ENCODE measurements at regions of chr2 and their contacts with region 1.

Region 1: GRCh38 chr2:102020596-102021181 is 28.9 kb downstream of the IL1R2 start:
- DNase-seq: peak; percentile 81 to 93 (median 91)
- H3K4me3 ChIP-seq: no peak overlapping the region
- H3K27ac ChIP-seq: no peak overlapping the region
- H3K4me1 ChIP-seq: peaks cover 4% of the 10 kb centered on the region
- H3K27me3 ChIP-seq: no peaks in the 10 kb centered on the region
- CTCF ChIP-seq: peak; percentile 97 to 98 (median 97)
- EP300 ChIP-seq: no peak
- POLR2A ChIP-seq: no peak

Region 2: DNA sequence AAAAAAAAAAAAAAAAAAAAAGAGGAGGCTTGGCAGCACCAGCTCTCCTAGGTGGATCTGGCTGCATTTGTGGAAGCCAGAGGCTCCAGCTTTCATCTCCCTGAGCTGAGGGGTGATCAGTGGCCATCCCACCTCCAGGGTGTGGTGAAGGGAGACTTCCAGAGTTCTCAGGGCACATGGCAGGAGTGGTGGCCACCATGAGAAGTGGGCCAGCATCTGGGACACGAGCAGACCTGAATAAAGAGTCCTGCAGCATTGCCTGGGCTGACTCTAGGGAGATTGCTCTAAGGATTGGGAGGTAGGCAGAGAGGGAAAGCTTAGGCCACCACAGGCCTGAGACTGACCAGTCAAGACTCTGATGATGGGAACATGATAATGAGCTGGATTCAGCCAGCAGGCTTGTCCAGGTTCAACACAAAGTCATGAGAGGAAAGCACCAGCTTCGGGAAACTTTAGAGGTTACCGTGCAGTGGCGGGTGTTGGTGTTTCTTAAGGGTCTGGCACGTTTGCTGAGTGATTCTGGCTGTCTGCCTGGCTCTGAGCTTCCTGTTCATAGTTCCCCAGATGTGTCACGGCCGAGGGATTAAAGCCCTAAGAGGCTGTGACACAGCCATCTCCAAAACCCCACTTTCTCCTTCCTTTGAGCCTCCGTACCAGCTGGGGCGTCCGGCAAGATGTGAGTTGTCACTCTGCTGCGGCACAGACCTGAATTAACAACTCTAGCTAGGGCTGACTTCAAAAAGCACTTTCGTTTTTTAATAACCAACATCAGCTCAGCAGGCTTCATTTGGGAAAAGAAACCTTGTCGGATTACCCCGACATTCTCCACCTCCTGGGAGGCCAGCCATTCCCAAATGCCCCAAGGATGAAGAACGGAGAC is 83.5 kb after region 1 on chr2:
- intact Hi-C with region 1: loop called in 1 of 4 experiments (anchors 10 kb)
- DNase-seq: peak; percentile 59 to 80 (median 68)
- H3K4me3 ChIP-seq: peak overlapping the region; percentile 33
- H3K27ac ChIP-seq: peak overlapping the region; percentile 9 to 48
- H3K4me1 ChIP-seq: peaks cover 12% of the 10 kb centered on the region
- H3K27me3 ChIP-seq: no peaks in the 10 kb centered on the region
- CTCF ChIP-seq: no peak
- EP300 ChIP-seq: no peak
- POLR2A ChIP-seq: no peak

Region 3: GRCh38 chr2:102166189-102166845 is 145.6 kb after region 1 on chr2:
- intact Hi-C with region 1: loop called (anchors 2 to 5 kb)
- DNase-seq: peak in 4 of 5 donors; percentile 30 to 64 (median 41)
- H3K4me3 ChIP-seq: no peak overlapping the region
- H3K27ac ChIP-seq: no peak overlapping the region
- H3K4me1 ChIP-seq: no peaks in the 10 kb centered on the region
- H3K27me3 ChIP-seq: no peaks in the 10 kb centered on the region
- CTCF ChIP-seq: peak; percentile 14 to 76 (median 65)
- EP300 ChIP-seq: no peak
- POLR2A ChIP-seq: no peak

Region 4: DNA sequence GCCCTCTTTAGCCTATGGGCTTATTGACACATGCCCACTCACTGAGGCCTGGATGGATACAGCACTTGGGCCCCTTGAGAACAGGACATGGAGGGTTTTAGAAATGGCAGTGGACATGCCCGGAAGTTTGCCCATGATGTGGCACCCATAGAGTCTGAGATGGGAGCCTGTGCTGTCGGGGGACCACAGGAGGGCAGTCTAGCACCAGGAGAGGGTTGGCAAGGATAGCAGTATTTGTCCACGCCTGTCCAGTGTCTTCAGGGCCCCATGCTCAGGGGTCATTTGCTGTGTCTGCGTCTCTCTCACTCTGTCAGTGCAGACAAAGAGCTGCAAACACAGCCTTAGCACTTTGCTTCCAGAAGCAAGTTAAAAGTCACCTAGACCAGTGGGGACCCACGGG is 214.8 kb after region 1 on chr2:
- intact Hi-C with region 1: loop called in 3 of 4 experiments (anchors 2 to 5 kb)
- DNase-seq: no peak
- H3K4me3 ChIP-seq: no peak overlapping the region
- H3K27ac ChIP-seq: no peak overlapping the region
- H3K4me1 ChIP-seq: peaks cover 2% of the 10 kb centered on the region
- H3K27me3 ChIP-seq: no peaks in the 10 kb centered on the region
- CTCF ChIP-seq: no peak
- EP300 ChIP-seq: no peak
- POLR2A ChIP-seq: no peak

Region 5: DNA sequence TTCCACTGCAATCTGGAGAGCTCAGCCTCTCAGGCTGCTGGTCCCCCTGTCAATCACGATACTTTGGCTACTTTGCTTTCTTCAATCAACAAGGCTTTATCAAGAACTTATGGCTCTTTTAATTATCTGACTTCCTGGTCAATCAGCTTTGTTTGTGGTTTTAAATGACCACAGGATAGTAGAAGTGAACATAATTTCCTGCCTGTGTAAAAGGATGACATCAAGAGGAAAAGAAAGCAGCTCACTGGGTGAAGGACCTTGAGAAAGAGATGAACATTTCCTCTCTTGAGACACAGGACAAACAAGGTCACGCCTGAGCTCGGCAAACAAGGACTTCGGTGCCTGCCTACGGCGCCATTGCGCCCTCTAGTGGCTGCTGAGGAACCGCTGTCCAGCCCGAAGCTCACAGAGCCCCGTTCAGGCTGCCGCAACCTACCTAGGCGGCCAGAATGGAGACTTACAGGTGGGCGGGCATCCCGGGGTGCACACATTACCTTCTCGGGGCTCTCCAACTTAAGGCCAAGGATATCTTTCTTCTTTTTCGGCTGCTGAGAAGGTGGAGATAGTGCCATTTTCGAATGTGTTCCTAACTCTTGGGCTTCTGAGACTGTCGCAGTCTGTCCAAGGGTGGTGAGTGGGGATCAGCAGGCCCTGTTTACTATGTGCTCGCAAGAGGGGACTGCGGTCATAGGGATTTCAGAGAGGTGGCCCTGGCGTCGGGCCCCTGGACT is 220.1 kb after region 1 on chr2:
- intact Hi-C with region 1: loop called (anchors 2 to 5 kb)
- DNase-seq: peak; percentile 88 to 94 (median 93)
- H3K4me3 ChIP-seq: no peak overlapping the region
- H3K27ac ChIP-seq: peak overlapping the region in 1 of 2 donors; percentile 25
- H3K4me1 ChIP-seq: peaks cover 2% of the 10 kb centered on the region
- H3K27me3 ChIP-seq: no peaks in the 10 kb centered on the region
- CTCF ChIP-seq: peak; percentile 95 to 99 (median 97)
- EP300 ChIP-seq: no peak
- POLR2A ChIP-seq: no peak

Region 6: GRCh38 chr2:102355526-102356380 is 335.1 kb after region 1 on chr2 and contains the start of gene IL18R1:
- intact Hi-C with region 1: loop called in 2 of 4 experiments (anchors 10 kb)
- DNase-seq: peak; percentile 66 to 84 (median 73)
- H3K4me3 ChIP-seq: peak within 1 kb of the TSS; percentile 69
- H3K27ac ChIP-seq: peak within 1 kb of the TSS; percentile 17 to 28
- H3K4me1 ChIP-seq: no peaks in the 10 kb centered on the region
- H3K27me3 ChIP-seq: no peaks in the 10 kb centered on the region
- CTCF ChIP-seq: peak; percentile 43 to 67 (median 61)
- EP300 ChIP-seq: no peak
- POLR2A ChIP-seq: no peak
- total RNA-seq, gene IL18R1: 0.83 to 3.1 (median 1.7) TPM

Measured in ovary (tissue), 10 donors.